Common myeloid progenitor, CD34-positive (primary cell): ENCODE measurements at regions of chr17 and their contacts with region 1.

Region 1: GRCh38 chr17:7897773-7898172 is 9.2 kb downstream of the CHD3 start:
- DNase-seq: peak; percentile 74 to 89 (median 87)
- H3K4me3 ChIP-seq: no peak overlapping the region
- H3K27ac ChIP-seq: no peak overlapping the region
- H3K4me1 ChIP-seq: no peaks in the 10 kb centered on the region
- H3K27me3 ChIP-seq: no peaks in the 10 kb centered on the region

Region 2: DNA sequence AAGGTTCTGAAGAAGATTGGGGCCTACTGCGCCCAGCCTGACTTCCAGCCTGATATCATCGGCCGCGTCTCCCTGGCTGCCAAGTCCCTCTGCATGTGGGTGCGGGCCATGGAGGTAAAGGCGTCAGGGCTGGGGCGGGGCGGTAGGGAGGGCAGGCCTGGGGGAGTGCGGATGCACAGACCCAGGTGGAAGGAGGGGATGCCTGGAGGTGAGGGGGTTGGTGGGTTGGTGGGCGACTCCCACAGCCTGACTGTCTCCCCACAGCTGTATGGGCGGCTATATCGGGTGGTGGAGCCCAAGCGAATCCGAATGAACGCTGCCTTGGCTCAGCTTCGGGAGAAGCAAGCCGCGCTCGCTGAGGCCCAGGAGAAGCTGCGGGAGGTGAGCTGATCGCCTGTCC is 90.6 kb before region 1 on chr17:
- CTCF ChIA-PET with region 1: no interaction called
- POLR2A ChIA-PET with region 1: no interaction called
- DNase-seq: no peak
- H3K4me3 ChIP-seq: no peak overlapping the region
- H3K27ac ChIP-seq: no peak overlapping the region
- H3K4me1 ChIP-seq: peaks cover 2 to 9% (median 7%) of the 10 kb centered on the region in 4 experiments
- H3K27me3 ChIP-seq: no peaks in the 10 kb centered on the region

Region 3: DNA sequence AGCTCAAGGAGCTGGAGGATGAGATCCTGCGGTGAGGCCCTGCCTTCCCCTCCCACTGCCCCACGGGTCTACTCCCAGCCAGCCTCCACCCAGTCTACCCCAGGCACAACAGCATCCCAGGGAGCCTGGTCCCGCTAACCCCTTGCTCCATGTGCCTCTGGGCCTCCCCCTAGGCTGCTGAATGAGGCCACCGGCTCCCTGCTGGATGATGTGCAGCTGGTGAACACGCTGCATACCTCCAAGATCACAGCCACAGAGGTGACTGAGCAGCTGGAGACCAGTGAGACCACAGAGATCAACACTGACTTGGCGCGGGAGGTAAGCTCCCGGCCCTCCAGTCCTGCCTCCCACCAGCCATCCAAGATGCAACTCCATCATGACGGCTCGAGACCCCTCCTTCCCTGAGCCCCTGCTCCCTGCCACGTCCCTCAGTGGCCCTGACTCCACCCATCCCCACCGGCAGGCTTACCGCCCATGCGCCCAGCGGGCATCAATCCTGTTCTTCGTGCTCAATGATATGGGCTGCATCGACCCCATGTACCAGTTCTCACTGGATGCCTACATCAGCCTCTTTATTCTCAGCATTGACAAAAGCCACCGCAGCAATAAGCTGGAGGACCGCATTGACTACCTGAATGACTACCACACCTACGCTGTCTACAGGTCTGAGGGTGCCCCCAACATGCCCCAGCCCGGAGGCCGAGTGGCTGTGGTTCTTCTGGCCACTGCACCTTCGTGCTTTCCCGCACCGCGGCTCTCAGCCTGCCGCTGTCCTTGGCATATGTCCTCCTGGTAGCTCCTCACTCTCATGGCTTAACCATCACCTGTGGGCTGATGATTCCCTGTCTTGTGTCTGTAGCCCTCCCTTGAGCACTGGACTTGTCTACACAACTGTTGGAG is 78.8 kb before region 1 on chr17:
- CTCF ChIA-PET with region 1: interaction called, 23 read pairs
- POLR2A ChIA-PET with region 1: no interaction called
- DNase-seq: no peak
- H3K4me3 ChIP-seq: no peak overlapping the region
- H3K27ac ChIP-seq: no peak overlapping the region
- H3K4me1 ChIP-seq: no peaks in the 10 kb centered on the region
- H3K27me3 ChIP-seq: no peaks in the 10 kb centered on the region

Region 4: GRCh38 chr17:7825206-7825990 is 72.4 kb before region 1 on chr17:
- CTCF ChIA-PET with region 1: interaction called, 23 read pairs
- POLR2A ChIA-PET with region 1: no interaction called
- DNase-seq: peak in 1 of 3 donors; percentile 15
- H3K4me3 ChIP-seq: no peak overlapping the region
- H3K27ac ChIP-seq: no peak overlapping the region
- H3K4me1 ChIP-seq: no peaks in the 10 kb centered on the region
- H3K27me3 ChIP-seq: peaks cover 0 to 2% (median 0%) of the 10 kb centered on the region in 5 experiments

Region 5: GRCh38 chr17:7846773-7847661 is 50.8 kb before region 1 on chr17:
- CTCF ChIA-PET with region 1: no interaction called
- POLR2A ChIA-PET with region 1: no interaction called
- DNase-seq: no peak
- H3K4me3 ChIP-seq: no peak overlapping the region
- H3K27ac ChIP-seq: no peak overlapping the region
- H3K4me1 ChIP-seq: peaks cover 0 to 41% (median 37%) of the 10 kb centered on the region in 4 experiments
- H3K27me3 ChIP-seq: no peaks in the 10 kb centered on the region

Region 6: GRCh38 chr17:7856883-7857723 is 40.7 kb before region 1 on chr17 and contains the start of gene NAA38:
- CTCF ChIA-PET with region 1: interaction called, 316 read pairs
- POLR2A ChIA-PET with region 1: no interaction called
- DNase-seq: peak; percentile 99 to 100 (median 100)
- H3K4me3 ChIP-seq: peak within 1 kb of the TSS; percentile 56 to 93 (median 86)
- H3K27ac ChIP-seq: peak within 1 kb of the TSS; percentile 88 to 93
- H3K4me1 ChIP-seq: peaks cover 5 to 42% (median 38%) of the 10 kb centered on the region in 4 experiments
- H3K27me3 ChIP-seq: no peaks in the 10 kb centered on the region

Region 7: DNA sequence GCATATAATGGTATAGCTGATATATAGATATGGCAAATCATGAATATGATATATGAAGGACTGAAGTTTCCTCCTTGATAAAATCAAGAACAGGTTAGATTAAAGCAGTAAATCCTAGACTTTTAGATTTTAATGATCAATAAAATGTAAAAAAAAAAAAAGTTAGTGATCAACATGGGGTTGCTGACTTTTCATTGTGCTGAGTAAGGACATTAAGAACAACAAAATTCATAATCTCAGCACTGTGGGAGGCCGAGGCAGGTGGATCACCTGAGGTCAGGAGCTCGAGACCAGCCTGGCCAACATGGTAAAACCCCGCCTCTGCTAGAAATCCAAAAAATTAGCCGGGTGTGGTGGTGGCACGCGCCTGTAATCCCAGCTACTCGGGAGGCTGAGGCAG is 19.5 kb before region 1 on chr17:
- CTCF ChIA-PET with region 1: interaction called, 20 read pairs
- POLR2A ChIA-PET with region 1: interaction called, 3 read pairs
- DNase-seq: no peak
- H3K4me3 ChIP-seq: no peak overlapping the region
- H3K27ac ChIP-seq: no peak overlapping the region
- H3K4me1 ChIP-seq: peaks cover 14 to 60% (median 42%) of the 10 kb centered on the region in 4 experiments
- H3K27me3 ChIP-seq: no peaks in the 10 kb centered on the region

Region 8: GRCh38 chr17:7915611-7916382 is 18.0 kb after region 1 on chr17 and contains the start of gene RNF227:
- CTCF ChIA-PET with region 1: interaction called, 37 read pairs
- POLR2A ChIA-PET with region 1: interaction called, 3 read pairs
- DNase-seq: peak; percentile 93 to 96 (median 96)
- H3K4me3 ChIP-seq: peak within 1 kb of the TSS; percentile 11 to 80 (median 48)
- H3K27ac ChIP-seq: peak within 1 kb of the TSS in 1 of 2 experiments; percentile 36
- H3K4me1 ChIP-seq: peaks cover 0 to 27% (median 22%) of the 10 kb centered on the region in 4 experiments
- H3K27me3 ChIP-seq: peaks cover 0 to 3% (median 0%) of the 10 kb centered on the region in 5 experiments

Region 9: GRCh38 chr17:8091033-8091687 is 193.4 kb after region 1 on chr17:
- CTCF ChIA-PET with region 1: no interaction called
- POLR2A ChIA-PET with region 1: no interaction called
- DNase-seq: peak in 2 of 3 donors; percentile 41 to 46
- H3K4me3 ChIP-seq: no peak overlapping the region
- H3K27ac ChIP-seq: no peak overlapping the region
- H3K4me1 ChIP-seq: peaks cover 0 to 8% (median 5%) of the 10 kb centered on the region in 4 experiments
- H3K27me3 ChIP-seq: peaks cover 0 to 18% (median 10%) of the 10 kb centered on the region in 5 experiments